Activated T-helper 1 cell treated with anti-CD3 and anti-CD28 coated beads, Interleukin-12 subunit alpha, Interleukin-12 subunit beta, Interleukin-2, Interleukin-4 antibody, amounts not matched to agents 30 ng/mL and 10 ng/mL and 1 ng/mL, durations not matched to agents 14 hours and 24 hours and 36 hours (primary cell): ENCODE measurements at regions of chr4 and their contacts with region 1.

Region 1: GRCh38 chr4:128809477-128810330 is at the start of gene JADE1:
- DNase-seq: peak; percentile 83
- H3K4me3 Mint-ChIP-seq: peak within 1 kb of the TSS; percentile 99
- H3K27ac Mint-ChIP-seq: peak within 1 kb of the TSS; percentile 100
- H3K4me1 Mint-ChIP-seq: peaks cover 17% of the 10 kb centered on the region
- H3K27me3 Mint-ChIP-seq: no peaks in the 10 kb centered on the region
- total RNA-seq, gene JADE1: 38.7 and 42.4 TPM in 2 replicates

Region 2: DNA sequence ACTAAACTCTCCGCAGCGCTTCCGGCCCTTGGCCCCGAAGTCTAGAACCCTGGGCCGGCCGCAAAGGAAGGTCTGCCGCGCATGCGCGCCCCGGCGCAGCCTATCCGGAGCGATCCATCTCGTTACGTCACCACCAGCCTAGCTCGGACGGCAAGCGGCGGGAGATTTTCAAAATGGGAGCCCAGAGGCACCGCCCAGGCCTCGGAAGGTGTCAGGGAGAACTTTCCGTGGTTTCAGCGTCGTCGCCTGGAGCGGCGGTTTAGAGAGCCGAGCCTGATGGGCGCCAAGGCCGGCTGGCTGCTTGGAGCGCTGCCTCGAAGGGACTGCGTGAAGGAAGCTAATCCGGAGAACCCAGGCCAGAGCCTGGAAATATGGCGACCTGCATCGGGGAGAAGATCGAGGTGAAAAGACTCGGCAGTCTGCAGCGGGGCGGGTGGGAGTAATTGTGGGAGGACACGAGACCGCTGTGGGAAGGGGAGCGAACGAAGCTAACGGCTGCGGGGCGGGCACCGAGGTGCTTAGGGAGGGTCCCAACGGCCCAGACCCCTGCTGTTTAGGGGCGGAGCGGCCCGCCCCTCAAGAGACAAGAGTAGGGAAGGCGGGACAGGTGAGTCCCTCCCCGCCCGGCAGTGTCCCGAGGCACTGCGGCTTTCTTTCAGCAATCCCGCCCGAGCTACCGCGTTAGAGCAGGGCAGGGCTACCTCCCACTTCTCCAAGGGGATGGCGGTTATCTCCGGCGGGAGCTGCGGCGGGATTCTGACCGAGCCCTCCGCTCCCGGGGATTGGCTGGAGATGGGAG is 928.7 kb before region 1 on chr4 and contains the start of gene PLK4:
- intact Hi-C with region 1: loop called (anchors 2 kb)
- DNase-seq: peak; percentile 96
- H3K4me3 Mint-ChIP-seq: peak within 1 kb of the TSS; percentile 91
- H3K27ac Mint-ChIP-seq: peak within 1 kb of the TSS; percentile 91
- H3K4me1 Mint-ChIP-seq: peaks cover 31% of the 10 kb centered on the region
- H3K27me3 Mint-ChIP-seq: no peaks in the 10 kb centered on the region
- total RNA-seq, gene PLK4: 40.7 and 41.2 TPM in 2 replicates

Region 3: GRCh38 chr4:128060699-128061565 is 748.8 kb before region 1 on chr4 and contains the start of gene LARP1B:
- intact Hi-C with region 1: loop called (anchors 1 kb)
- DNase-seq: peak; percentile 93
- H3K4me3 Mint-ChIP-seq: peak within 1 kb of the TSS; percentile 88
- H3K27ac Mint-ChIP-seq: peak within 1 kb of the TSS; percentile 95
- H3K4me1 Mint-ChIP-seq: peaks cover 6% of the 10 kb centered on the region
- H3K27me3 Mint-ChIP-seq: no peaks in the 10 kb centered on the region
- total RNA-seq, gene LARP1B: 33.3 and 34.5 TPM in 2 replicates

Region 4: GRCh38 chr4:128287871-128288688 is 521.6 kb before region 1 on chr4:
- intact Hi-C with region 1: loop called (anchors 1 kb)
- DNase-seq: peak; percentile 96
- H3K4me3 Mint-ChIP-seq: peak overlapping the region; percentile 96
- H3K27ac Mint-ChIP-seq: peak overlapping the region; percentile 93
- H3K4me1 Mint-ChIP-seq: peaks cover 31% of the 10 kb centered on the region
- H3K27me3 Mint-ChIP-seq: no peaks in the 10 kb centered on the region

Region 5: DNA sequence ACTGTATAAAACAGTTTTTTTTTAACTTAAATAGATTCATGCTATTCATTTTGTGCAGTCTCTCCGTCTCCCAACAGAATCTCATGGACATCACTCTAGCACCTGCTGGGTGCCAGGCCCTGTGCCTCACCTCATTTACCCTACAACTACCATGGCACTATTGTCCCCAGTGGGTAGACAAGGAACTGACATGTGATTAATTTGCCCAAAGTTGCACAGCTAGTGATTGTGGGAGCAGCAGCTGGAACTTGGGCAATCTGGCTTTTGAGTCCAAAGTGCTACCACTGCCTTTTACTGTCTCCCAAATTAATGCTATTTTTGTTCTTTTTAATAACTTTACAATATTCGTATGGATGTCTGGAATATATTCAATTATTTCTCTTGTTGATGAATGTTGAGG is 510.9 kb before region 1 on chr4:
- intact Hi-C with region 1: no loop called
- DNase-seq: no peak
- H3K4me3 Mint-ChIP-seq: no peak overlapping the region
- H3K27ac Mint-ChIP-seq: no peak overlapping the region
- H3K4me1 Mint-ChIP-seq: no peaks in the 10 kb centered on the region
- H3K27me3 Mint-ChIP-seq: no peaks in the 10 kb centered on the region

Region 6: GRCh38 chr4:128517739-128518510 is 291.8 kb before region 1 on chr4:
- intact Hi-C with region 1: loop called (anchors 5 kb)
- DNase-seq: no peak
- H3K4me3 Mint-ChIP-seq: no peak overlapping the region
- H3K27ac Mint-ChIP-seq: no peak overlapping the region
- H3K4me1 Mint-ChIP-seq: peaks cover 25% of the 10 kb centered on the region
- H3K27me3 Mint-ChIP-seq: peaks cover 5% of the 10 kb centered on the region

Region 7: GRCh38 chr4:128782076-128782715 is 27.5 kb before region 1 on chr4:
- intact Hi-C with region 1: loop called (anchors 1 kb)
- DNase-seq: no peak
- H3K4me3 Mint-ChIP-seq: no peak overlapping the region
- H3K27ac Mint-ChIP-seq: no peak overlapping the region
- H3K4me1 Mint-ChIP-seq: no peaks in the 10 kb centered on the region
- H3K27me3 Mint-ChIP-seq: peaks cover 2% of the 10 kb centered on the region

Region 8: GRCh38 chr4:129093191-129093920 is 283.7 kb after region 1 on chr4 and contains the start of gene SCLT1:
- intact Hi-C with region 1: loop called (anchors 1 kb)
- DNase-seq: peak; percentile 96
- H3K4me3 Mint-ChIP-seq: peak within 1 kb of the TSS; percentile 66
- H3K27ac Mint-ChIP-seq: peak within 1 kb of the TSS; percentile 42
- H3K4me1 Mint-ChIP-seq: peaks cover 56% of the 10 kb centered on the region
- H3K27me3 Mint-ChIP-seq: no peaks in the 10 kb centered on the region
- total RNA-seq, gene SCLT1: 24.3 and 24.4 TPM in 2 replicates